Activated CD8-positive, alpha-beta T cell treated with anti-CD3 and anti-CD28 coated beads for 36 hours (primary cell): ENCODE measurements at regions of chr7 and their contacts with region 1.

Region 1: DNA sequence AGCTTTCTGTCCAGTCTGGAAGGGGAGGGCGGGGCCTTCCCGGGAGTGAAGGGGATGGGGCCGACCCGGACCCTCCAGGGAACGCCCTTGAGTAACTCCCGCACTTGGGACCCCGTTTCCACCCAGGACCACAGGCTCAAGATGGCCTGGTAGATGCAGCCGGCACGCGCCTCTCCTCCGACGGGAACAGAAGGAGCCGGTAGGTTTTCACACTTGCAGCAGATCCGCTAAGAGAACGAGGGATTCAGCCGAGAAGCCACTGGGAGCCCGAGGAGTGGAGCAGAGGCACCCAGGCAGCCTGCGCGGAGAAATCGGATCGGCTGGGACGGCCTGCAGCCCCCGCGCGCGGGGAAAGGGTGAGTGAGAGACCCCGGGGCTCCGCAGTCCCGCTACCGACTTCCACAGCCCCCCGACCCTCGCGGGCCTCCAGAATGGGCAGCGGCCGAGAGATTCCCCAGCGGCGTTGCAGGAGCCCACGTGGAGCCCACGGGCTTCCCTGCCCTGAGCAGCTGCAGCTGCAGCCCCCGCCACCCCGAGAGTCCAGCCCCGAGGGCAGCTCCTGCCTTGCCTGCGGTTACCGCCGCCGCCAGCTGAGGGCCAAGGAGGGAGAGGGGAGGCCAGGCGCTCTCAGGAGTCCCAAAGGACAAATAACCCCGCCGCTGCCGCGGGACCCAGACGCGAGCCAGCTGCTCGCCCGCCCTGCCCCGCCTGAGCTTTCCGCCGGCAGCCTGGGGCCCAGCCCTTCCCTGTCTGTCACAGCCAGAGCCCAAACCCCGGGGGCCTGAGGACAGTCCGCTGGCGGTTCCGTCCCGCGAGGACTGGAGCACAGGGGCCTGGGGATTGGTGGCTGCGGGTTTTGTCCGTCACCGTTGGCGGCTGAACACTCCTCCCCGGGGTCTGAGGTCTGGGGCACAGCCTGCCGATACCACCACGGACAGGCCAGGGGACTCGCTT is 21.8 kb downstream of the IFT22 start:
- DNase-seq: no peak
- ATAC-seq: no peak
- H3K4me3 Mint-ChIP-seq: no peak overlapping the region
- H3K27ac Mint-ChIP-seq: no peak overlapping the region
- H3K4me1 Mint-ChIP-seq: peaks cover 3% of the 10 kb centered on the region
- H3K27me3 Mint-ChIP-seq: peaks cover 48% of the 10 kb centered on the region
- CTCF ChIP-seq: no peak

Region 2: GRCh38 chr7:101258243-101258731 is 41.5 kb before region 1 on chr7:
- CTCF ChIA-PET with region 1: no interaction called
- POLR2A ChIA-PET with region 1: no interaction called
- intact Hi-C with region 1: no loop called
- DNase-seq: no peak
- ATAC-seq: no peak
- H3K4me3 Mint-ChIP-seq: no peak overlapping the region
- H3K27ac Mint-ChIP-seq: no peak overlapping the region
- H3K4me1 Mint-ChIP-seq: no peaks in the 10 kb centered on the region
- H3K27me3 Mint-ChIP-seq: peaks cover 2% of the 10 kb centered on the region
- CTCF ChIP-seq: no peak

Region 3: GRCh38 chr7:101315336-101315735 is 15.5 kb after region 1 on chr7:
- CTCF ChIA-PET with region 1: interaction called, 22 read pairs
- POLR2A ChIA-PET with region 1: no interaction called
- intact Hi-C with region 1: no loop called
- DNase-seq: peak; percentile 74
- ATAC-seq: peak; percentile 47
- H3K4me3 Mint-ChIP-seq: no peak overlapping the region
- H3K27ac Mint-ChIP-seq: no peak overlapping the region
- H3K4me1 Mint-ChIP-seq: no peaks in the 10 kb centered on the region
- H3K27me3 Mint-ChIP-seq: no peaks in the 10 kb centered on the region
- CTCF ChIP-seq: peak; percentile 83